ENCODE measurements at regions of chr2 and their contacts with region 1.

Region 1: DNA sequence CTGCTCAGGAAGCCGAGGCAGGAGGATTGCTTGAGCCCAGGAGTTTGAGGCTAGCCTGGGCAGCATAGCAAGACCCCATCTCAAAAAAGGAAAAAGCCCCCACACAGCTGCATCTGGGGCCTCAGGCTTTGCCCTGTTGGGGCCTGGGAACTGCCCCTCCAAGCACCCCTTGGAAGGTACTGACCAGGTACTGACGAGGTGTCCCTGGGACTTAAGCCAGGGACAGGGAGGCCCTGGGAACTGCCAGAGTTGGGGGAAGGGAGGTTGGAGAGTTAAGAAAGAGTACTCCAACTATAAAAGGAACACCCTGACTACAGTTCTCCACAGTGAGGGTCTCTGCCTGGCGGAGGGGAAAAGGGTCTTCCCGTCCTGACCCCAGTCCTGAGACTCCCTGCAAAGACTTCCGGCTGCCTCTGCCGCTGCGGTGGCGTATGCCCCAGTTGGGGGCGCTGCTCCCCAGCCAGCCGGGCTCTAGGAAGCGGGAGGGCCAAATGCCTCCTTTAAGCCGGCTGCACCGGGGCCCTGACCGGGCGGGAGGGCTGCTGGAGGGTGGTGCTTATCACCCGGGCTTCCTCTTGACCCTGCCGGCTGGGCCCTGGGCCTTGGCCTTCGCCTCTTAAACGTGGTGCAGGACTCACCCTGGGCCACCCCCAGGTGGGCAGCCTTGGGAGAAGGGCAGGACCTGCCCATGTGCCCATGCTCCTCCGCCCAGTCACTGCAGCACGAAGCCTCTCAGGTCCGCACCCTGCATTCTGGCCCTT is 12.8 kb downstream of the SLC30A3 start:
- DNase-seq: no peak
- H3K4me3 ChIP-seq: no peak overlapping the region
- H3K27ac ChIP-seq: no peak overlapping the region
- H3K4me1 ChIP-seq: no peaks in the 10 kb centered on the region
- H3K27me3 ChIP-seq: no peaks in the 10 kb centered on the region
- CTCF ChIP-seq: peak in 1 of 3 experiments; percentile 23
- POLR2A ChIP-seq: no peak

Region 2: DNA sequence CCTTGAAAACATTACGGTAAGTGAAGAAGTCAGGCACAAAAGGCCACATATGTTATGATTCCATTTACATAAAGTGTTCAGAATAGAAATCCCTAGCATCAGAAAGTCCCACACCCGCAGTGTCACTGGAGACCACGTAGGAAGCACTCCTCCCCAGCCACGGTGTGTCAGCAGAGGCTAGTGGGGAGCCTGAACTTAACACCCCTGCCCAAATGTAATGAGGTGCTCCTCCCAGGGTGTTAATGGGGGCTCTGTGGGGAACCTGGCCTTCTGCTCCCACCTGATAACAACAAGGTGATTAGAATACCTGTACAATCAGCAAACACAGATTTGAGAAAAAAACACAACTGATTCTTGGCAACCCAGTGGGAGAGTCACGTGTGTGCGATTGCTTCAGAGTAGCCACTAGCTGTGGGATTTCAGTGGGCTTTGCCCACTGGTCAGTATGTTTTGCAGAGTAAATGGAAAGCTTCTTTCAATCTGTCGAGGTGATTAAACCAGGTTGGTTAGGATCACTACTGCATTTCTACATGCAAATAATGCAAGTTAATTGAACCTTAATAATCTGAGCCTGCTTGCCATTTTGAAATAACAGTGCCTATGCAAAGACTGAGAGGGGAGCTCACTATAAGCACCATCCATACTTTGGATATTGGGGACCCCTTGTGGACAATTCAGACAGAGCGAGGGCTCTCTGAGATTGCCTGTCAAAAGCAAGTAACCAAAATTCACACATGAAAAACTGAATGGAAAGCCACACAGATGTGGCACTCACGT is 58.8 kb before region 1 on chr2:
- intact Hi-C with region 1: no loop called
- DNase-seq: no peak
- H3K4me3 ChIP-seq: no peak overlapping the region
- H3K27ac ChIP-seq: no peak overlapping the region
- H3K4me1 ChIP-seq: peaks cover 4% of the 10 kb centered on the region
- H3K27me3 ChIP-seq: no peaks in the 10 kb centered on the region
- CTCF ChIP-seq: peak; percentile 34 to 70 (median 38)
- POLR2A ChIP-seq: no peak

Region 3: DNA sequence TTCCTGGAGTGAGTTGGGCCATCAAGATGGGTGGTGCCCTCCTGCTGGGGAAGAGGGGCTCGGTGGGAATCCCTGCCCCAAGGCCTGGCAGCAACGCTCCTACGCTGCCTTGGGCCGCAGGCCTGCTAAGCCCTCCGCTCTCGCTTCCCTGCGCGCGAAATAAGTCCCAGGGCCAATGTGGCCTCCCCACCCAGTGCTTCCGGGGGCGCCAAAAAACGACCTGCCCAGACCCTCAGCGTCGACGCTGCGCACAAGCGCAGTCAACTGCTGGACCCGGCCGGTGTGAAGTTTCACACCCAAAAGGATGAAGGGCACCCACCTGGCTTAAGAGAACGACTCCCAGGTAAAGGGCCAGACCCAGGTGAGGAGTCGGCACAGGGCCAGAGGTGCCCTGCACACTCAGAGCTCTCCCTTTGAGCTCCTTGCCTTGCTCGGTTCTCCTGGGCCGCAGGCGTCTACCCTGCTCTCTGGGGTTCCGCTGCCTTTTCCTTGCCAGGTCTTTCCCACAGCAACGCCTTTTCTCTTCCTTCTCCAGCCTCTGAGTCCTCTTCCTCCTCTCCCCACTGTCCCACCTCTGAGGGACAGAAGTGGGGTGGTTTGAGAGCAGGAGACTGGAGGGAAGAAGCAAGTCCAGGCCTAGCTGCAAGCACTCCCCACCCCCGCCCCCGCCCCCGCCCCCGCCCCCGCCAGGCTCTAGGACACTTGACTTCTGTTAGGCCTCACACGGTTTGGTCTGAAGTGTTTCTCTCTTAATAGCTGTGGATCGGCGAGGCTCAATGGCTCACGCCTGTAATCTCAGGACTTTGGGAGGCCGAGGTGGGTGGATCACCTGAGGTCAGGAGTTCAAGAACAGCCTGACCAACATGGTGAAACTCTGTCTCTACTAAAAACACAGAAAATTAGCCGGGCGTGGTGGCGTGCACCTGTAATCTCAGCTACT is 25.4 kb after region 1 on chr2 and contains the start of gene DNAJC5G:
- intact Hi-C with region 1: loop called (anchors 2 kb)
- DNase-seq: no peak
- H3K4me3 ChIP-seq: no peak within 1 kb of the TSS
- H3K27ac ChIP-seq: no peak within 1 kb of the TSS
- H3K4me1 ChIP-seq: no peaks in the 10 kb centered on the region
- H3K27me3 ChIP-seq: no peaks in the 10 kb centered on the region
- CTCF ChIP-seq: no peak
- POLR2A ChIP-seq: no peak
- total RNA-seq, gene DNAJC5G: 1.5 TPM